Activated B cell treated with CpG ODN at 0.5 μM for 24 hours (primary cell): ENCODE measurements at regions of chr1 and their contacts with region 1.

Region 1: GRCh38 chr1:27741121-27741520 is 15.4 kb downstream of the FAM76A start:
- DNase-seq: no peak
- ATAC-seq: no peak
- H3K4me3 Mint-ChIP-seq: no peak overlapping the region
- H3K27ac Mint-ChIP-seq: no peak overlapping the region
- H3K4me1 Mint-ChIP-seq: no peaks in the 10 kb centered on the region
- H3K27me3 Mint-ChIP-seq: no peaks in the 10 kb centered on the region
- CTCF ChIP-seq: no peak

Region 2: GRCh38 chr1:28190337-28190979 is 449.3 kb after region 1 on chr1:
- CTCF ChIA-PET with region 1: no interaction called
- POLR2A ChIA-PET with region 1: no interaction called
- intact Hi-C with region 1: no loop called
- DNase-seq: no peak
- ATAC-seq: no peak
- H3K4me3 Mint-ChIP-seq: no peak overlapping the region
- H3K27ac Mint-ChIP-seq: no peak overlapping the region
- H3K4me1 Mint-ChIP-seq: no peaks in the 10 kb centered on the region
- H3K27me3 Mint-ChIP-seq: no peaks in the 10 kb centered on the region
- CTCF ChIP-seq: no peak

Region 3: GRCh38 chr1:28950006-28950405 is 1208.9 kb after region 1 on chr1:
- CTCF ChIA-PET with region 1: no interaction called
- POLR2A ChIA-PET with region 1: interaction called, 14 read pairs
- intact Hi-C with region 1: no loop called
- DNase-seq: no peak
- ATAC-seq: no peak
- H3K4me3 Mint-ChIP-seq: no peak overlapping the region
- H3K27ac Mint-ChIP-seq: peak overlapping the region; percentile 5
- H3K4me1 Mint-ChIP-seq: peaks cover 17% of the 10 kb centered on the region
- H3K27me3 Mint-ChIP-seq: no peaks in the 10 kb centered on the region
- CTCF ChIP-seq: no peak